GM23248 (cell line): ENCODE measurements at regions of chr7 and their contacts with region 1.

Region 1: GRCh38 chr7:151459726-151460473 is 20.0 kb upstream of the CRYGN start:
- DNase-seq: peak; percentile 89
- H3K4me3 ChIP-seq: peak overlapping the region; percentile 62
- H3K27ac ChIP-seq: peak overlapping the region; percentile 55
- H3K4me1 ChIP-seq: peaks cover 20% of the 10 kb centered on the region
- H3K27me3 ChIP-seq: no peaks in the 10 kb centered on the region

Region 2: DNA sequence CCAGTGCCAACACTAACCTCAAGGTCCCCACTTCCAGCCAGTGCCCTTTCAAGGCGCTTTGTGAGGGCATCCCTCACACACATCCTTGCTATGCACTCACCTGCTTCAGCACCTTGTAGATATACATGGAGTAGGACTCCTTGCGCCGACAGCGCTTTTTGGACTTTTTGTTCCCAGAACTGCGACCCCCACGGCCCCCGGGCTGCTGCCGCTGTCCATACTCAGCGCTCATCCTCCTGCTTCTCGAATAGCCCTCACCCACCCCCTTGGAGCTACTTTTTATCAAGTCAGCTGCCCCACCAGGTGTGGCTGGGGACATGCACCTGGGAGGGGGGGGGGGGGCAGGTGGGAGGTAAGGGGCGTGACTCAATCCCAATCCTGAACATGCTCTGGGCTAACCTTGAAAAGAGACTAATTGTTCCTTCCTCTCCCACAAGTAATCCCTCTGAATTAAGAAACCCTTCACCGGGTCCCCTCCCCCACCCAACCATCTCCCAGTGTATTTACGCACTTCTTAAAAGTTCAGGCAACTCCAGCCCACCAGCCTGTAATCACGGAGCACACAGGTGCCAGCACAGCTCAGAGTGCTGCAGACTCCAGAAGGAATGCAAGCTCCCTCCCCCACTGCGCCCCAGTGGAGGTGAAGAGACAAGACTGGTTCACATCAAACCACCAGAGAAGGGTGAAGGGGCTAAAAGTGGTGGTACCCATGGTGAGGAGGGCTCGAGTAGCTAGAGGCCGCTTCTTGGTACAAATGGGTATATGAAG is 249.6 kb before region 1 on chr7 and contains the start of gene H2BK1:
- in situ Hi-C with region 1: no loop called
- DNase-seq: no peak
- H3K4me3 ChIP-seq: no peak within 1 kb of the TSS
- H3K27ac ChIP-seq: no peak within 1 kb of the TSS
- H3K4me1 ChIP-seq: no peaks in the 10 kb centered on the region
- H3K27me3 ChIP-seq: peaks cover 8% of the 10 kb centered on the region
- total RNA-seq, gene H2BK1: not detected in 2 replicates

Region 3: DNA sequence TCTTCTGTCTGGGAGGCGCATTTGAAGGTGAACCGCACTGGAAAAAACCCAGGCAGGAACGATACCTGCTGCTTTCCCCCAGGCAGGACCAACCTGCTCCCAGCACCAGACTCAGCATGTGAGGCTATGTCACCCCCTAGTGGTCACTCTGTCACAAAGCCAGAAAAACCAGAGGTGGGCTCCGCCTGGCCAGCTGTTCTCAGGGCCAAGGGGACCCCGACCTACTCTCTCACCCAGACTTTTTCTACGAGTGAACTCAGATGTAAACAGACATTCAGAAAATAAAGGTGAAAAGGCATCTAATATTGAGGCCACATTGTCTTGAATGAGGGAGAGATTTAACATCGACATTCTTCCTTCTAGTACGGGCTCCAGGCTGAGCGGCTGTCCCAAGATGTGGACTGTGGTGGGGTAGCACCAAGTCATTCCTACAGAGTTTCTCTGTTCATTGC is 299.7 kb after region 1 on chr7:
- in situ Hi-C with region 1: loop called (anchors 10 kb)
- DNase-seq: peak; percentile 75
- H3K4me3 ChIP-seq: no peak overlapping the region
- H3K27ac ChIP-seq: no peak overlapping the region
- H3K4me1 ChIP-seq: peaks cover 20% of the 10 kb centered on the region
- H3K27me3 ChIP-seq: peaks cover 3% of the 10 kb centered on the region

Region 4: GRCh38 chr7:151876899-151877777 is 417.2 kb after region 1 on chr7 and contains the start of gene PRKAG2:
- in situ Hi-C with region 1: no loop called
- DNase-seq: peak; percentile 49
- H3K4me3 ChIP-seq: peak within 1 kb of the TSS; percentile 64
- H3K27ac ChIP-seq: no peak within 1 kb of the TSS
- H3K4me1 ChIP-seq: no peaks in the 10 kb centered on the region
- H3K27me3 ChIP-seq: peaks cover 58% of the 10 kb centered on the region
- total RNA-seq, gene PRKAG2: 11.5 and 19.5 TPM in 2 replicates